CD8-positive, alpha-beta T cell (primary cell): ENCODE measurements at regions of chr12 and their contacts with region 1.

Region 1: DNA sequence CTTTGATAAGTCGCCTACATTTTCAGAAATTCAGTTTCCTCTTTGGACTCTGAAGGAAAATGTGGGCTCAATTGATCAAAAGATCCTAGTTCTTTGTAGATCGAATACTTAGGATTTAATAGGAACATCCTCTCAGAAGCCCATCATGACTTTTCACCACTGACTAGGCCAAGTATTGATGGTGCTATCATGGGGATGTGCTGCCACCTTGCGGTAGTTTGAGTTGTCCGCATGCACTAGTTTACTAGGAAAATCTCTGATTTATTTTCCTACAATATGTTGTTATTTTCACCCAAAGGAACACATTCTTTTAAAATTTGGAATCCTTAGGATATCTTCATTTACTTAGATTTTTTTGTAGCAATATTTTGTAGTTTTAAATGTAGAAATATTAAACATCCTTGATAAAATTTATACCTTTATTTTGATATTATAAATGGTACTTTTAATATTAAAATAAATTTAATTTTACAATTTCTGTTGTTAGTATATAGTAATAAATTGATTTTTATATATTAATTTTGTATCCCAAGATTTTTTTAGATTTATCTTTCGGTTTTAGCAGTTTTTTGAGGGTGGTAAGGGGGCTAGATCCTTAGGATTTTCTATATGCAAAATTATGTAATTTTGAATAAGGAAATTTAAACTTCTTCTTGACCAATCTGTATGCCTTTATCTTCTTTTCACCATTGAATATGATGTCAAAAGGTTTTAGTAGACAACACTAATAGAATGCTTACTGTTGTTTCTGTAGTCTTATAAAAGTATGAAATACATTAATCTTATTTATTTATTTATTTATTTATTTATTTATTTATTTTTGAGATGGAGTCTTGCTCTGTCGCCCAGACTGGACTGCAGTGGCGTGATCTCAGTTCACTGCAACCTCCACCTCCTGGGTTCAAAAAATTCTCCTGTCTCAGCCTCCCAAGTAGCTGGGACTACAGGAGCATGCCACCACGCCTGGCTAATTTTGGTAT is 52.9 kb upstream of the OR9K2 start:
- DNase-seq: peak; percentile 47 to 88 (median 85)
- ATAC-seq: peak; percentile 60
- H3K4me3 ChIP-seq: no peak overlapping the region
- H3K4me3 Mint-ChIP-seq: no peak overlapping the region
- H3K27ac ChIP-seq: no peak overlapping the region
- H3K27ac Mint-ChIP-seq: no peak overlapping the region
- H3K4me1 ChIP-seq: no peaks in the 10 kb centered on the region
- H3K4me1 Mint-ChIP-seq: peaks cover 2% of the 10 kb centered on the region
- H3K27me3 ChIP-seq: no peaks in the 10 kb centered on the region
- H3K27me3 Mint-ChIP-seq: peaks cover 23% of the 10 kb centered on the region
- CTCF ChIP-seq: peak; percentile 79

Region 2: DNA sequence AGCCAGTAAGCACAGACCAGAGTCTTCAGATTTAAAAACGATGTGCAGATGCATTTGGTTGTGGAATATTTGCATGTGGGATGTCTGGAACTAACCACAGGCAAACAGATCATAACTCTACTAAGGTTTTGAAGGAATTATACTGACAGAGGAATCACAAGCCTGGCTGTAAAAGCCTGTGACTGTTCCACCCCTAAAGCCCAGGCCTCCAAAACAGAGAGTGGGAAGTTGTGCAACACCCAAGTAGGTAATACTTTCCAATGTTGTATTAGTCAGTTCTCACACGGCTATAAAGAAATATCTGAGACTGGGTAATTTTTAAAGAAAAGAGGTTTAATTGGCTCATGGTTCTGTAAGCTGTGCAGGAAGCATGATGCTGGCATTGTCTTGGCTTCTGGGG is 357.1 kb before region 1 on chr12:
- CTCF ChIA-PET with region 1: interaction called, 14 read pairs
- POLR2A ChIA-PET with region 1: no interaction called
- intact Hi-C with region 1: no loop called
- DNase-seq: no peak
- ATAC-seq: no peak
- H3K4me3 ChIP-seq: no peak overlapping the region
- H3K4me3 Mint-ChIP-seq: no peak overlapping the region
- H3K27ac ChIP-seq: no peak overlapping the region
- H3K27ac Mint-ChIP-seq: no peak overlapping the region
- H3K4me1 ChIP-seq: no peaks in the 10 kb centered on the region
- H3K4me1 Mint-ChIP-seq: no peaks in the 10 kb centered on the region
- H3K27me3 ChIP-seq: no peaks in the 10 kb centered on the region
- H3K27me3 Mint-ChIP-seq: peaks cover 6% of the 10 kb centered on the region
- CTCF ChIP-seq: no peak

Region 3: GRCh38 chr12:54840317-54840771 is 233.0 kb before region 1 on chr12:
- CTCF ChIA-PET with region 1: interaction called, 15 read pairs
- POLR2A ChIA-PET with region 1: no interaction called
- intact Hi-C with region 1: no loop called
- DNase-seq: no peak
- ATAC-seq: no peak
- H3K4me3 ChIP-seq: no peak overlapping the region
- H3K4me3 Mint-ChIP-seq: no peak overlapping the region
- H3K27ac ChIP-seq: no peak overlapping the region
- H3K27ac Mint-ChIP-seq: no peak overlapping the region
- H3K4me1 ChIP-seq: no peaks in the 10 kb centered on the region
- H3K4me1 Mint-ChIP-seq: peaks cover 3% of the 10 kb centered on the region
- H3K27me3 ChIP-seq: no peaks in the 10 kb centered on the region
- H3K27me3 Mint-ChIP-seq: peaks cover 11% of the 10 kb centered on the region
- CTCF ChIP-seq: no peak

Region 4: DNA sequence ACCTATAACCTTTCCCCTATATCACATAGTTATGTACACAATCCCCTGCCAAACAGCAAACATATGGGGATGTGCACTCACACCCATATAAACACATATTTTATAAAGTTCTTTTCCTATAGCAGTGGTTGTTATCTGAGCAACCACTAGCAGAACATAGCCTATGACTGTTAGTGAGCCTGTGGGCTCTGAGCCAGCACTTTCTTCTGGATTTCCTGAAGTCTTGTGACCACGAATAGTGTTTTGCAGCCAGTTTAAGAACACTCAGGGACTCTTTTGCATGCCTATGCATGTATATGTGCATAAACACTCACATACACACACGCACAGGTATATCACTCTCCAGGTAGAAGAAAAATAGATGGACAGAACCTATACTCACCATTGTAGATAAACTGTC is 105.9 kb before region 1 on chr12:
- CTCF ChIA-PET with region 1: interaction called, 27 read pairs
- POLR2A ChIA-PET with region 1: no interaction called
- intact Hi-C with region 1: no loop called
- DNase-seq: peak in 5 of 9 experiments; percentile 40 to 65 (median 50)
- ATAC-seq: peak; percentile 61
- H3K4me3 ChIP-seq: peak overlapping the region in 1 of 2 experiments; percentile 6
- H3K4me3 Mint-ChIP-seq: peak overlapping the region; percentile 70
- H3K27ac ChIP-seq: peak overlapping the region in 1 of 2 experiments; percentile 34
- H3K27ac Mint-ChIP-seq: peak overlapping the region; percentile 91
- H3K4me1 ChIP-seq: peaks cover 57% of the 10 kb centered on the region
- H3K4me1 Mint-ChIP-seq: peaks cover 80% of the 10 kb centered on the region
- H3K27me3 ChIP-seq: no peaks in the 10 kb centered on the region
- H3K27me3 Mint-ChIP-seq: no peaks in the 10 kb centered on the region
- CTCF ChIP-seq: no peak

Region 5: DNA sequence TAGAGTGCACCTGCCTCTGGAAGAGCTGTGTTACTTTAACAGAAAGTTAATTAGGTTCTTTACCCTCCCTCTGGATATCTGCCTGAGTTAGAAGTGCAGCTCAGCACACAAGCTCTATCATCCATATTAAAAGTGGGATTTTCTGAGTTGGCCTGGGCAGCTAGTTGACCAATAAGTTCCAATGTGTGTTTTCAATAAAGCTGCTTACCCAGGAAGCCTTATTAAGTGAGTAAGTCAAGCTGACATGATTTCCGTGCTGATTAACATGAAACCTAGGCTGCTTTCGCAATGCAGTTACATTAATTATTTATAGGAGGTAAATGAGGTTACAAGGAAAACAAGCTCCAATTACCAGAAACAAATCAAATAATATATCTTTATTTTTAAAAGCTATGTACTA is 48.8 kb before region 1 on chr12:
- CTCF ChIA-PET with region 1: interaction called, 14 read pairs
- POLR2A ChIA-PET with region 1: no interaction called
- intact Hi-C with region 1: no loop called
- DNase-seq: no peak
- ATAC-seq: no peak
- H3K4me3 ChIP-seq: no peak overlapping the region
- H3K4me3 Mint-ChIP-seq: no peak overlapping the region
- H3K27ac ChIP-seq: no peak overlapping the region
- H3K27ac Mint-ChIP-seq: no peak overlapping the region
- H3K4me1 ChIP-seq: no peaks in the 10 kb centered on the region
- H3K4me1 Mint-ChIP-seq: peaks cover 4% of the 10 kb centered on the region
- H3K27me3 ChIP-seq: peaks cover 2 to 6% of the 10 kb centered on the region in 2 experiments
- H3K27me3 Mint-ChIP-seq: peaks cover 33% of the 10 kb centered on the region
- CTCF ChIP-seq: no peak

Region 6: GRCh38 chr12:55142669-55143565 is 69.6 kb after region 1 on chr12:
- CTCF ChIA-PET with region 1: interaction called, 4 read pairs
- POLR2A ChIA-PET with region 1: no interaction called
- intact Hi-C with region 1: loop called in 1 of 2 experiments (anchors 2 kb)
- DNase-seq: peak; percentile 6 to 65 (median 42)
- ATAC-seq: no peak
- H3K4me3 ChIP-seq: no peak overlapping the region
- H3K4me3 Mint-ChIP-seq: no peak overlapping the region
- H3K27ac ChIP-seq: no peak overlapping the region
- H3K27ac Mint-ChIP-seq: no peak overlapping the region
- H3K4me1 ChIP-seq: peaks cover 3% of the 10 kb centered on the region
- H3K4me1 Mint-ChIP-seq: peaks cover 5% of the 10 kb centered on the region
- H3K27me3 ChIP-seq: no peaks in the 10 kb centered on the region
- H3K27me3 Mint-ChIP-seq: peaks cover 5% of the 10 kb centered on the region
- CTCF ChIP-seq: peak; percentile 81